ENCODE measurements at regions of chr17 and their contacts with region 1.

Region 1: DNA sequence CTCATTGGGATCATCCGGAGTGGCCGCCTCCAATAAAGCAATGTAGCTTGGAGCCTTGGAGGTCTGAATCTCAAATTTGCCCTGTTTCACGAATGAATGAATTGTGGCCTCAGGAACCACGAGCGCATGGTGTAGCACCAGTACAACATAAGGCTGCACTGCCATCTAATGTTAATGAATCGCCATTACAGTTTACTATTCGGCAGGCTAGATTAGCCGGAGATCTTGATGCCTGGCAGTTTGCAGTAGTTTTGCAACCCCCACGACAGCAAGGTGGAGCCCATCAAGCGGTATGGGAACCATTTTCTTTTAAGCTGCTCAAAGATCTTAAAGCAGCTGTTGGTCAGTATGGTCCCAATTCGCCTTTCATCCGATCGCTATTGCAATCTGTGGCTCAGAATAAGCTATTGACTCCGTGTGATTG is 18.8 kb downstream of the ALOX15B start:
- DNase-seq: peak; percentile 87
- ATAC-seq: peak; percentile 85
- H3K4me3 ChIP-seq: no peak overlapping the region
- H3K4me3 Mint-ChIP-seq: no peak overlapping the region
- H3K27ac ChIP-seq: no peak overlapping the region
- H3K27ac Mint-ChIP-seq: no peak overlapping the region
- H3K4me1 ChIP-seq: peaks cover 22 to 25% of the 10 kb centered on the region in 2 donors
- H3K4me1 Mint-ChIP-seq: peaks cover 29% of the 10 kb centered on the region
- H3K27me3 ChIP-seq: peaks cover 0 to 24% (median 9%) of the 10 kb centered on the region in 4 experiments
- H3K27me3 Mint-ChIP-seq: peaks cover 31% of the 10 kb centered on the region
- CTCF ChIP-seq: peak; percentile 86

Region 2: GRCh38 chr17:7825206-7825990 is 232.3 kb before region 1 on chr17:
- CTCF ChIA-PET with region 1: interaction called, 11 read pairs
- POLR2A ChIA-PET with region 1: no interaction called
- intact Hi-C with region 1: loop called (anchors 1 kb)
- DNase-seq: no peak
- ATAC-seq: no peak
- H3K4me3 ChIP-seq: no peak overlapping the region
- H3K4me3 Mint-ChIP-seq: no peak overlapping the region
- H3K27ac ChIP-seq: no peak overlapping the region
- H3K27ac Mint-ChIP-seq: no peak overlapping the region
- H3K4me1 ChIP-seq: no peaks in the 10 kb centered on the region
- H3K4me1 Mint-ChIP-seq: no peaks in the 10 kb centered on the region
- H3K27me3 ChIP-seq: peaks cover 0 to 2% (median under 1%) of the 10 kb centered on the region in 4 experiments
- H3K27me3 Mint-ChIP-seq: peaks cover 21% of the 10 kb centered on the region
- CTCF ChIP-seq: no peak

Region 3: GRCh38 chr17:7989781-7990655 is 67.7 kb before region 1 on chr17:
- CTCF ChIA-PET with region 1: interaction called, 131 read pairs
- POLR2A ChIA-PET with region 1: interaction called, 3 read pairs
- intact Hi-C with region 1: loop called (anchors 1 kb)
- DNase-seq: peak; percentile 93
- ATAC-seq: peak; percentile 94
- H3K4me3 ChIP-seq: peak overlapping the region in 4 of 5 experiments; percentile 65 to 70 (median 68)
- H3K4me3 Mint-ChIP-seq: peak overlapping the region; percentile 80
- H3K27ac ChIP-seq: peak overlapping the region; percentile 27 to 49
- H3K27ac Mint-ChIP-seq: peak overlapping the region; percentile 86
- H3K4me1 ChIP-seq: peaks cover 8 to 19% of the 10 kb centered on the region in 2 donors
- H3K4me1 Mint-ChIP-seq: peaks cover 23% of the 10 kb centered on the region
- H3K27me3 ChIP-seq: peaks cover 0 to 6% (median 0%) of the 10 kb centered on the region in 4 experiments
- H3K27me3 Mint-ChIP-seq: peaks cover 8% of the 10 kb centered on the region
- CTCF ChIP-seq: peak; percentile 99

Region 4: GRCh38 chr17:8079291-8080207 is 21.8 kb after region 1 on chr17:
- CTCF ChIA-PET with region 1: interaction called, 121 read pairs
- POLR2A ChIA-PET with region 1: interaction called, 3 read pairs
- intact Hi-C with region 1: no loop called
- DNase-seq: peak; percentile 90
- ATAC-seq: peak; percentile 82
- H3K4me3 ChIP-seq: peak overlapping the region in 4 of 5 experiments; percentile 57 to 76 (median 70)
- H3K4me3 Mint-ChIP-seq: peak overlapping the region; percentile 96
- H3K27ac ChIP-seq: peak overlapping the region; percentile 48 to 75
- H3K27ac Mint-ChIP-seq: peak overlapping the region; percentile 92
- H3K4me1 ChIP-seq: peaks cover 9 to 15% of the 10 kb centered on the region in 2 donors
- H3K4me1 Mint-ChIP-seq: peaks cover 14% of the 10 kb centered on the region
- H3K27me3 ChIP-seq: peaks cover 0 to 19% (median 10%) of the 10 kb centered on the region in 4 experiments
- H3K27me3 Mint-ChIP-seq: peaks cover 6% of the 10 kb centered on the region
- CTCF ChIP-seq: peak; percentile 90

Region 5: DNA sequence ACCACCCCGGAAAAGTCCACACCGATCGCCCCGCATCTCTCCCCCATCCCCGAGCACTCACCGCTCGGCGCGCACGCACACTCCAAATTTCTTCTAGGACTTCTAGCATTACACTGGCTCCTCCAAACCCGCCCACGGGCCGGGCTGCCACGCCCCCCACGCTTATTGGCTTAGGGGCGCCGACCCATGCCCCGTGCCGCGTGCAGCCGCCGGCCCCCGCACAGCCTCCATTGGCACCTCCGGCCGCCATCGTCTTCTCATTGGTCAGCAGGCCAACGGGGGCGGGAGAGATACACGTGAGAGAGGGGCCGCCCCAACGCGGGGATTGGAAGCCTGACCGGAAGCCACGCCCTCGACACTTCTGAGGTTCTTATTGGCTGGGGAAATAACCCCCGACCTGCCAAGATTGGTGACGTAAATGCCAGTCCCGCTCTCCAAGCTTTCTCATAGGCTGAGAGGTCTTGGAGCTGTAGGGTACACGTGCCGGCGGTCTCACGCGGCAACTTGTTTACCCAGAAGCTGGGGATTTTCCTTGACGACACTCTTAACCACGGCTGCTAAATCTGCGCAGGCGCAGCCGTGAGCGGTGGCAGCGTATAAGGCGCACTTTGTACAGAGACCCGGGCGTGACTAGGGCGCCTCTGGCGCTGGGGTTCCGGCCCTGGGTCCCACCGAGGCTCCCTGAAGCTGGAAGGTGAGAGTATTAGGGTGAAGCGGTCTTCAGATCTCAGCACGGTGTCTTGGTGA is 98.7 kb after region 1 on chr17:
- CTCF ChIA-PET with region 1: interaction called, 30 read pairs
- POLR2A ChIA-PET with region 1: no interaction called
- intact Hi-C with region 1: no loop called
- DNase-seq: peak; percentile 100
- ATAC-seq: peak; percentile 79
- H3K4me3 ChIP-seq: peak overlapping the region; percentile 69 to 96 (median 84)
- H3K4me3 Mint-ChIP-seq: no peak overlapping the region
- H3K27ac ChIP-seq: peak overlapping the region; percentile 98 to 100
- H3K27ac Mint-ChIP-seq: no peak overlapping the region
- H3K4me1 ChIP-seq: peaks cover 59 to 85% of the 10 kb centered on the region in 2 donors
- H3K4me1 Mint-ChIP-seq: peaks cover 50% of the 10 kb centered on the region
- H3K27me3 ChIP-seq: no peaks in the 10 kb centered on the region
- H3K27me3 Mint-ChIP-seq: no peaks in the 10 kb centered on the region
- CTCF ChIP-seq: no peak

Region 6: GRCh38 chr17:8324005-8324531 is 266.4 kb after region 1 on chr17:
- CTCF ChIA-PET with region 1: no interaction called
- POLR2A ChIA-PET with region 1: no interaction called
- intact Hi-C with region 1: no loop called
- DNase-seq: no peak
- ATAC-seq: no peak
- H3K4me3 ChIP-seq: no peak overlapping the region
- H3K4me3 Mint-ChIP-seq: no peak overlapping the region
- H3K27ac ChIP-seq: no peak overlapping the region
- H3K27ac Mint-ChIP-seq: no peak overlapping the region
- H3K4me1 ChIP-seq: peaks cover 15 to 24% of the 10 kb centered on the region in 2 donors
- H3K4me1 Mint-ChIP-seq: peaks cover 19% of the 10 kb centered on the region
- H3K27me3 ChIP-seq: peaks cover 0 to 43% (median 17%) of the 10 kb centered on the region in 4 experiments
- H3K27me3 Mint-ChIP-seq: peaks cover 45% of the 10 kb centered on the region
- CTCF ChIP-seq: no peak

Region 7: DNA sequence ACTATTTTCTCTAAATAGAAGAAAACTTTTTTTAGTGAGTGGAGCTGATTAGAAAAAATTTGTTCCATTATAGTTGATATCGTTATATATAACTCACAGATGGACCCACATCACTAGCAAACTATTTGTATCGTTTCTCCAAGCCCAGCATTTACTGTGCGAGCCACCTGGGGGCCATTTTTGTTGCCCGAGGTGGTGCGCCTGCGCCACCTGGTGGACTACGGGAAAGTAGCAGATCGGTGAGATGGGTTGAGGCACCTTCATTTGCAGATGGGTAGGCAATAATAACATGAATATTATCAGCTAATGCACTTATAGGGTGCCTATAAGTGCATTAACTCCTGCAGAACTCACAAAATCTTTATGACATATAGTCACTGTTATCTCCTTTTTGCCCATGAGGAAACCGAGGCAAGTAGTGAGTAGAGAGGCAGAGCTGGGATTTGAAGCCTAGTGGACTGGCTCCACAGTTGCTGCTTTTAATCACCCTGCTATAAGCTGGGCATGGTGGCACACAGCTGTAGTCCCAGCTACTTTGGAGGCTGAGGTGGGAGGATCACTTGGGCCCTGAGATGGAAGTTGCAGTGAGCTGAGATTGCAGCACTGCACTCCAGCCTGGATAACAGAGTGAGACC is 940.4 kb after region 1 on chr17:
- CTCF ChIA-PET with region 1: interaction called, 10 read pairs
- POLR2A ChIA-PET with region 1: no interaction called
- intact Hi-C with region 1: loop called (anchors 2 kb)
- DNase-seq: peak; percentile 85
- ATAC-seq: peak; percentile 79
- H3K4me3 ChIP-seq: no peak overlapping the region
- H3K4me3 Mint-ChIP-seq: no peak overlapping the region
- H3K27ac ChIP-seq: no peak overlapping the region
- H3K27ac Mint-ChIP-seq: no peak overlapping the region
- H3K4me1 ChIP-seq: peaks cover 17 to 18% of the 10 kb centered on the region in 2 donors
- H3K4me1 Mint-ChIP-seq: peaks cover 22% of the 10 kb centered on the region
- H3K27me3 ChIP-seq: peaks cover 0 to 17% (median 9%) of the 10 kb centered on the region in 4 experiments
- H3K27me3 Mint-ChIP-seq: peaks cover 15% of the 10 kb centered on the region
- CTCF ChIP-seq: peak; percentile 99